ENCODE measurements at regions of chr13 and their contacts with region 1.

Region 1: GRCh38 chr13:27504128-27504867 is 53.9 kb upstream of the MTIF3 start:
- DNase-seq: no peak
- H3K4me3 ChIP-seq: no peak overlapping the region
- H3K27ac ChIP-seq: no peak overlapping the region
- H3K4me1 ChIP-seq: no peaks in the 10 kb centered on the region
- H3K27me3 ChIP-seq: no peaks in the 10 kb centered on the region
- CTCF ChIP-seq: no peak
- EP300 ChIP-seq: no peak
- POLR2A ChIP-seq: no peak

Region 2: GRCh38 chr13:26759907-26760834 is 744.1 kb before region 1 on chr13 and contains the start of gene GPR12:
- intact Hi-C with region 1: loop called in 1 of 4 experiments (anchors 10 kb)
- DNase-seq: no peak
- H3K4me3 ChIP-seq: no peak within 1 kb of the TSS
- H3K27ac ChIP-seq: no peak within 1 kb of the TSS
- H3K4me1 ChIP-seq: peaks cover 2% of the 10 kb centered on the region
- H3K27me3 ChIP-seq: no peaks in the 10 kb centered on the region
- CTCF ChIP-seq: no peak
- EP300 ChIP-seq: no peak
- POLR2A ChIP-seq: no peak
- total RNA-seq, gene GPR12: 0.07 to 0.12 TPM in 2 of 7 donors, not detected in the others